ENCODE measurements at regions of chr12 and their contacts with region 1.

Region 1: DNA sequence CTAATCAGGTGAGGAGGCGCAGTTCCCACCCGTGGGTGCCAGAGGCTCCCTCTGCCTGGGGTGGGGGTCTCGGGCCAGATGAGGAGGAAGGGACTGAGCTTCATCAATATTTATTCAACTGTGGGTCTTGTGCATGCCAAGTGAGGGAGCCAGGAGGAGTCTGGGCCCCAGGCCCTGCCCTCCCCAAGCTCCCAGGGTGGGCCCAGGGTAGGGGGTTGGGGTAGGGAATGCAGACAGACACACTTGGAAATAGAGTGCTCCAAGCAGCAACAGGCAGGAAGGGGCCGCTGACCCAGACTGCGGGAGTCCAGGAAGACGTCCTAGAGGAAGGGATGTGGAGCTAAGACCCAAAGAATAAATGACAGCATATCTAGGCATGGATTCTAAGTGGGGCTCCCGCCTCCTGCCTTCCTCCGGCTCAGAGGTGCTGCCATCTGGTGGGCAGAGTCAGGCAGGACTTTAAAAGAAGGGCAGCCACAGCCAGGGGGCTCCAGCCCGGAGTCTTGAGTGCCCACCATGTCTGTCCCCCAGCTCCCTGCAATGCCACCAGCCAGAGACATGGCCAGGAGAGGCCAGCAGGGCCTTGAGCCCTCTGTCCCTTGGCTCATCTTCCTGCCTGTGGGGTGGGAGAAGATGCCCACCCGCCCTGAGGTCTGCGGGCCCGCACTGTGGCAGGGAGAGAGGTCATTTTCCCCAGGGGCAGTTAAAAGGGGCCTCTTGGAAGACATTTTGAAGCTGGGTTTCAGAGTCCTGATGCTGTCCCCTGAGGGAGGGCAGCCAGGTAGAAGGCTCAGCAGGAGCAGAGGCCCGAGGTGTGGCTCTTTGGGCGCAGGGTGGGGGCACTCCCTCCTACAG is 70.1 kb downstream of the PHETA1 start:
- DNase-seq: peak in 9 of 10 donors; percentile 50 to 94 (median 67)

Region 2: DNA sequence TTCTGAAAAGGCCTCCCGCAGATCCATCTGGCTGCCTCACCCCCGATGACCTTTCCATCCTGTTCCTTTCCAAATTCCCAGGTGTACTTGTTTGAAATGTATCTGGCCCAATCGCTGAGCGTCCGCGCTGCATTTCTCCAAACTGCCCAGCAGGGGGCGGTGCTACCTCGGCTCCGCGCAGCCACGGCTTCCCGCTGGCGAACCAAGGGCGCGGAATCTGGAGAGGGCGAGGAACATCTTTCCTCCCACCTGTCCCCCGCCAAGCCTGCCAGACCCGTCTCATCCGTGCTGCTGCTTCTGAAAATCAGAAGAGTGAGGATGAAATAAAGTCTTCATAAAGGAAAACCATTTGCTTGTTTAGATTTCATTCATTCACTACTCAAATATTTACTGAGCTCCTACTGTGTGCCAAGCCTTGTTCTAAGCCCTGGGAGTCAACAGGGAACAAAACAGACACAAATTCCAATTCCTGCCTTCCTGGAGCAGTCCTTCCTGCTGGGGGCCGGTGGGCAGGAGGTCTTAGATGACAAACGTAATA is 361.6 kb before region 1 on chr12:
- intact Hi-C with region 1: loop called (anchors 1 kb)
- DNase-seq: peak; percentile 43 to 95 (median 64)

Region 3: DNA sequence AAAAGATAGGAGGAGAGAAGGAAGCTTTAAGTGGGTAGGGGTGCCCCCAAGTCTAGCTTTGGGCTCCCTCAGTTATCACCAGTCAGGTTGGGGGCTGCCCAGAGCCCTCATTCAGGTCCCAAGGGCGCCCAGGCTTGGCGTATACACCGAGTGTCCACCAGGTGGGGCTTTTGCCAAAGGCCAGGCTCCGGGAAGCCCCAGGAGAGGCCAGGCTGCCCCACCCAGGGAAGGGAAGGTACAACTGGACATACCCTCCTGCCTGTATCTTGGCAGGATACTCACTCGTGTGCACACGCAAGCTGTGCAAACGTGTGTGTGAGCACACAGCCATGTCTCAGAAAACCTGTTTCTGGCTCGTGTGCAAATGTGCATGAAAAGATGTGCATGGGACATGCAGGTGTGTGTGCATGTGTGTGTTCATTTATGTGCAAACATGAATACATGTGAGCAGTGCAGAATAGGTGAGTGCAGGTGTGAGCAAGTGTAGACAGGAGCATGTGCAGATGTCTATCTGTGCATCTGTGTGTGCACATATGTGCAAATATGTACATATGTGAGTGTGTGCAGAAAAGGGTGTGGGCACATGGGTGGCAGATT is 274.5 kb before region 1 on chr12:
- intact Hi-C with region 1: loop called (anchors 5 kb)
- DNase-seq: peak in 9 of 10 donors; percentile 40 to 92 (median 61)

Measured in posterior cingulate gyrus (tissue), 11 donors.